ENCODE measurements at regions of chr9 and their contacts with region 1.

Region 1: DNA sequence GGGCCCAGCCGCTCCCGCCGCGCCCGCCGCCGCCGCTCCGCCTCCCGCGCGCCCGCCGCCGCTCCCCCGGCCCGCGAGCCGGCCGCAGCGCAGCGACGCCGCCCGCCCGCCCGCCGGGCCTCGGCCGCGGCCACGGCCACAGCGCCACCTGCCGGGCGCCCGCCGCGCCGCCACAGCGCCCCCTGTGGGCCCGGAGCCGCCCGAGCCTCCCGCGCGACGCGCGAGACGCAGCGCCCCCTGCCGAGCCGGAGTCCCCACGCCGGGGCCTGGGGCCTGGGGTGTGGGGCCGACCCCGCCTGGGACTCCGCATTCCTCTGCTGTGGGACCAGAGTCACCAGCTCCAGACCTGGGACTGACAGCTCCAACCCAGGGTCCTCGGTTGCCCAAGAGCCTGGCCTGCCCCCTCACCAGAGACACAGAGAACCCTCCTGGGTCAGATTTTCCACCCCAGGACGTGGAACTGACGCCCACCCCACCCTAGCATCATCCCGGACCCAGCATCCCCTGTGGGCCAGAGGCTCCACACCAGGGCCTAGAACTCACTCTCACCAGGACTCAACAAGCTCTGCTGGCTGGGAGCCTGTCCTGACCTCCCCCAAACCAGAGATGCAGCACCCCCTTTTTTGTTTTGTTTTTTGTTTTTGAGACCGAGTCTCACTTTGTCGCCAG is at the start of gene RAPGEF1:
- DNase-seq: peak; percentile 61 to 87 (median 78)
- H3K4me3 ChIP-seq: peak within 1 kb of the TSS; percentile 60
- H3K27ac ChIP-seq: peak within 1 kb of the TSS; percentile 70 to 80
- H3K4me1 ChIP-seq: peaks cover 4% of the 10 kb centered on the region
- H3K27me3 ChIP-seq: no peaks in the 10 kb centered on the region
- CTCF ChIP-seq: peak; percentile 54 to 90 (median 90)
- EP300 ChIP-seq: no peak
- POLR2A ChIP-seq: no peak
- total RNA-seq, gene RAPGEF1: 17.0 to 64.4 (median 37.2) TPM

Region 2: GRCh38 chr9:131349881-131350563 is 390.1 kb before region 1 on chr9:
- intact Hi-C with region 1: loop called in 3 of 4 experiments (anchors 5 to 10 kb)
- DNase-seq: peak; percentile 85 to 92 (median 89)
- H3K4me3 ChIP-seq: no peak overlapping the region
- H3K27ac ChIP-seq: no peak overlapping the region
- H3K4me1 ChIP-seq: no peaks in the 10 kb centered on the region
- H3K27me3 ChIP-seq: no peaks in the 10 kb centered on the region
- CTCF ChIP-seq: peak; percentile 76 to 87 (median 80)
- EP300 ChIP-seq: no peak
- POLR2A ChIP-seq: no peak

Region 3: DNA sequence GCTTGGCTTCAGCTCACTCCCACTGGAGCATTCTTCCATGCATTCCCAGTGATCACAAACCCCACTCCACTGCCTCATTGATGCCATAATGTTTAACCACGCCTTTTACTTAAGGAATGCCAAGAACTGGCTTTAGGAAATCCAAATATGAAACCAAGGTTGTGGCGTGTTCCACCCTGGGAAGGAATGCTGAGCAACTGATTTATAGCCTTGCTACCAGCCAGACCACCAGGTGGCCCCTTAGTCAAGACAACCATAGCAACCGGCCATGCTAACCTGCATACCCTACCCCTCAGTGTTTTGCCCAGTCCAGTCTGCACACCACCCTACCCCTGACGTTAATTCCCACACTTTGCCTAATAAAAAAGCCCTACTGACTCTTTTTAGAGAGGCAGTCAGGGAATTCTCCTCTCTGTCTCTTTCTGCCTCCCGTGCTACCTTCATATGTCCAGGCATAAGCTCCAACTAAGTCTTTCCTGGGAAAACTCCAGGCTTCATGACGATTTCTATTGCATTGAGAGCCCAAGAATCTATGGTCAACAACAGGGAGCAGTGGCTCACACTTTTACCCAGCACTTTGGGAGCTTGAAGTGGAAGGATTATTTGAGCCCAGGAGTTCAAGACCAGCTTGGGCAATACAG is 373.2 kb before region 1 on chr9:
- intact Hi-C with region 1: loop called in 1 of 4 experiments (anchors 5 kb)
- DNase-seq: peak in 3 of 5 donors; percentile 19 to 51 (median 48)
- H3K4me3 ChIP-seq: no peak overlapping the region
- H3K27ac ChIP-seq: no peak overlapping the region
- H3K4me1 ChIP-seq: no peaks in the 10 kb centered on the region
- H3K27me3 ChIP-seq: no peaks in the 10 kb centered on the region
- CTCF ChIP-seq: peak in 1 of 3 donors; percentile 27
- EP300 ChIP-seq: no peak
- POLR2A ChIP-seq: no peak

Region 4: GRCh38 chr9:131530920-131531832 is 208.9 kb before region 1 on chr9 and contains the start of gene UCK1:
- intact Hi-C with region 1: loop called in 1 of 4 experiments (anchors 10 kb)
- DNase-seq: peak; percentile 74 to 85 (median 81)
- H3K4me3 ChIP-seq: peak within 1 kb of the TSS; percentile 69
- H3K27ac ChIP-seq: peak within 1 kb of the TSS; percentile 4 to 45
- H3K4me1 ChIP-seq: peaks cover 7% of the 10 kb centered on the region
- H3K27me3 ChIP-seq: no peaks in the 10 kb centered on the region
- CTCF ChIP-seq: peak in 1 of 3 donors; percentile 14
- EP300 ChIP-seq: no peak
- POLR2A ChIP-seq: peak; percentile 42
- total RNA-seq, gene UCK1: 19.8 to 33.5 (median 29.7) TPM

Region 5: GRCh38 chr9:131590908-131591844 is 148.9 kb before region 1 on chr9:
- intact Hi-C with region 1: loop called (anchors 1 to 5 kb)
- DNase-seq: peak; percentile 71 to 86 (median 82)
- H3K4me3 ChIP-seq: no peak overlapping the region
- H3K27ac ChIP-seq: no peak overlapping the region
- H3K4me1 ChIP-seq: no peaks in the 10 kb centered on the region
- H3K27me3 ChIP-seq: no peaks in the 10 kb centered on the region
- CTCF ChIP-seq: peak; percentile 53 to 87 (median 83)
- EP300 ChIP-seq: no peak
- POLR2A ChIP-seq: no peak

Region 6: GRCh38 chr9:131603199-131603598 is 136.9 kb before region 1 on chr9:
- intact Hi-C with region 1: loop called in 1 of 4 experiments (anchors 5 kb)
- DNase-seq: no peak
- H3K4me3 ChIP-seq: no peak overlapping the region
- H3K27ac ChIP-seq: no peak overlapping the region
- H3K4me1 ChIP-seq: peaks cover 4% of the 10 kb centered on the region
- H3K27me3 ChIP-seq: no peaks in the 10 kb centered on the region
- CTCF ChIP-seq: no peak
- EP300 ChIP-seq: no peak
- POLR2A ChIP-seq: no peak

Region 7: GRCh38 chr9:131678499-131679111 is 61.5 kb before region 1 on chr9:
- intact Hi-C with region 1: no loop called
- DNase-seq: peak in 3 of 5 donors; percentile 45 to 60 (median 50)
- H3K4me3 ChIP-seq: no peak overlapping the region
- H3K27ac ChIP-seq: peak overlapping the region in 1 of 2 donors; percentile 47
- H3K4me1 ChIP-seq: peaks cover 32% of the 10 kb centered on the region
- H3K27me3 ChIP-seq: no peaks in the 10 kb centered on the region
- CTCF ChIP-seq: no peak
- EP300 ChIP-seq: no peak
- POLR2A ChIP-seq: no peak

Region 8: GRCh38 chr9:131809941-131810344 is 69.8 kb after region 1 on chr9:
- intact Hi-C with region 1: no loop called
- DNase-seq: no peak
- H3K4me3 ChIP-seq: no peak overlapping the region
- H3K27ac ChIP-seq: no peak overlapping the region
- H3K4me1 ChIP-seq: no peaks in the 10 kb centered on the region
- H3K27me3 ChIP-seq: no peaks in the 10 kb centered on the region
- CTCF ChIP-seq: no peak
- EP300 ChIP-seq: no peak
- POLR2A ChIP-seq: no peak

Region 9: DNA sequence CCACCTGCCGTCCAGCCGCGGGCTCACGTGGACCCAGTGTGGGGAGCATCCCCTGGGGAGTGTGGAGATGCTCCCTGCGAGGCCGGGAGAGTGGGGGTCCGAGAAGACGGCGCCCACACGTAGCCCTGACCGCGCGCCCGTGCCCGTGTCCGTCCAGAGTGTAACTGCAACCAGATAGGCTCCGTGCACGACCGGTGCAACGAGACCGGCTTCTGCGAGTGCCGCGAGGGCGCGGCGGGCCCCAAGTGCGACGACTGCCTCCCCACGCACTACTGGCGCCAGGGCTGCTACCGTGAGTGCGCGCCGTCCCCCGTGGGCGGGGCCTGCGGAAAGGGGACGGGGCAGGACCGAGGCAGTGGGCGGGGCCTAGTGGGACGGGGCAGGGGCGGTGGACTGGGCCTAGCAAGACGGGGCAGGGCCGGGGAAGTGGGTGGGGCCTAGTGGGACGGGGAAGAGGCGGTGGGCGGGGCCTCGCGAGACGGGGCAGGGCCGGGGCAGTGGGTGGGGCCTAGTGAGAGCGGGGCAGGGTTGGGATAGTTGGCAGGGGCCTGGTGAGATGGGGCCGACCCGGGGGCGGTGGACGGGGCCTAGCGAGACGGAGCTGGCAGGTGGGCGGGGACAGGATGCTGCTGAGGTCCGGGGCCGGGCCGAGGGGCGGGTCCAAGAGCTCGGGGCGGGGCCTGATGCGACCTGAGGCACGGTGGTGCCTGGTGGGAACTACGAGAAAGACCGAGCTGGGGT is 500.8 kb after region 1 on chr9:
- intact Hi-C with region 1: no loop called
- DNase-seq: peak; percentile 96 to 99 (median 98)
- H3K4me3 ChIP-seq: peak overlapping the region; percentile 69
- H3K27ac ChIP-seq: peak overlapping the region in 1 of 2 donors; percentile 66
- H3K4me1 ChIP-seq: peaks cover 3% of the 10 kb centered on the region
- H3K27me3 ChIP-seq: no peaks in the 10 kb centered on the region
- CTCF ChIP-seq: peak in 1 of 3 donors; percentile 19
- EP300 ChIP-seq: no peak
- POLR2A ChIP-seq: no peak

Measured in ovary (tissue), 10 donors.